Activated naive CD8-positive, alpha-beta T cell treated with anti-CD3 and anti-CD28 coated beads, Interleukin-2, amount 10 ng/mL, durations not matched to agents 7 days and 5 days (primary cell): ENCODE measurements at regions of chr14 and their contacts with region 1.

Region 1: DNA sequence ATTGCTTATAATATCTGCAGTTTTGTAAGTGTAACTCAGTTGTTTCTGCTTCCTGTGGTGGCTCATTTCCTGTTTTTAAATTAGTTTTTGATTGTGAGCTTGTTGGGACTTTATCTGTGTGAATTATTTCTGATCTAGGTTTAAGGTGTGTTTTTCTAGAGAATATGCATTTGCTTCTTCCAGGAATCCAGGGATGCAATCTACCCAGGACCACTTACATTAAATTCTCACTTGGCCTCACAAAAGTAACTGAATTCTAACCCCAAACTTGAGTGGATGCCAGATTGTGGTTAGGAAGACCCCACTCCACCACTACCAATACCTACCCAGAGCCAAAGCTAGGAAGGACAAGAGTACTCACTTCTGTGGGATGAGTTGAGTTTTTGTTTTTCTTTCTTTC is 11.9 kb downstream of the STYX start:
- DNase-seq: no peak
- ATAC-seq: peak; percentile 50
- H3K4me3 Mint-ChIP-seq: peak overlapping the region; percentile 73
- H3K27ac Mint-ChIP-seq: peak overlapping the region; percentile 89
- H3K4me1 Mint-ChIP-seq: peaks cover 40% of the 10 kb centered on the region
- H3K27me3 Mint-ChIP-seq: no peaks in the 10 kb centered on the region

Region 2: GRCh38 chr14:52695481-52696091 is 46.3 kb before region 1 on chr14 and contains the start of gene ERO1A:
- POLR2A ChIA-PET with region 1: interaction called, 13 read pairs
- DNase-seq: peak; percentile 83
- ATAC-seq: peak; percentile 68
- H3K4me3 Mint-ChIP-seq: peak within 1 kb of the TSS; percentile 92
- H3K27ac Mint-ChIP-seq: peak within 1 kb of the TSS; percentile 95
- H3K4me1 Mint-ChIP-seq: peaks cover 27% of the 10 kb centered on the region
- H3K27me3 Mint-ChIP-seq: no peaks in the 10 kb centered on the region
- total RNA-seq, gene ERO1A: 185 to 203 TPM

Region 3: GRCh38 chr14:52729925-52730667 is 11.8 kb before region 1 on chr14 and contains the start of gene STYX:
- POLR2A ChIA-PET with region 1: interaction called, 11 read pairs
- DNase-seq: peak; percentile 98
- ATAC-seq: peak; percentile 94
- H3K4me3 Mint-ChIP-seq: peak within 1 kb of the TSS; percentile 94
- H3K27ac Mint-ChIP-seq: peak within 1 kb of the TSS; percentile 86
- H3K4me1 Mint-ChIP-seq: peaks cover 10% of the 10 kb centered on the region
- H3K27me3 Mint-ChIP-seq: no peaks in the 10 kb centered on the region
- total RNA-seq, gene STYX: 25.1 to 29.5 TPM